Psoas muscle (tissue), 8 donors: ENCODE measurements at regions of chr5 and their contacts with region 1.

Region 1: DNA sequence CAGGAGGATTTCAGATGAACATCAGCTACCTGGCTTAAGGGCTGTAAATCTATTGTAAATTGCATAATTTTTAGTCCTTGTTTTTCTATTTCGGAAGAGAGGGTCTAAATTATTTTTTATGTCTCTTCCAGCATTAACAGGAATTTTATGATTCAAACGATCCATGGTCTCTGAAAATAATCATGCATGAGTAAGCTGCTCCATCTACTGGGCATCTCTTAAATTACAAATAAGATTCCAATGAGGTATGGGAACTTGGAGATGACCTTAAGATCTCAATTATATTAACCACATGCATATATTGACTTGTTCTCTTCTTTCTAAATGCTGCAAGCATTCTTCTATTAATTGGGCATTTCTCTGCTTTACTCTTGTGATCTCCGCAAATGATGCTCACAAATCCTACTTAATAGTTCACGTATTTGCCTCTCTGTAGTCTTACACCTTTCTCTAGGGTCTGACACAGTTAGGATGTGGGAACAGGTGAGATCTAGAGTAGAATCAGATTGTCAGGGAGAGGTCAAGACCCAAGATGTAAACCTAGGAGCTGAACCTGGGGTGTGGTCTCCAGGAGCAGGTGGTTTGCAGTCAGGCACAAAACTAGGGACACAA is 86.9 kb downstream of the NUDT12 start:
- DNase-seq: no peak
- ATAC-seq: peak; percentile 51 to 85 (median 70)
- H3K4me3 ChIP-seq: no peak overlapping the region
- H3K27ac ChIP-seq: no peak overlapping the region
- H3K4me1 ChIP-seq: peaks cover 37% of the 10 kb centered on the region
- H3K27me3 ChIP-seq: no peaks in the 10 kb centered on the region
- CTCF ChIP-seq: peak; percentile 76

Region 2: GRCh38 chr5:103232393-103232999 is 243.2 kb before region 1 on chr5:
- intact Hi-C with region 1: loop called (anchors 1 to 5 kb)
- DNase-seq: no peak
- ATAC-seq: peak in 3 of 4 donors; percentile 53 to 75 (median 72)
- H3K4me3 ChIP-seq: no peak overlapping the region
- H3K27ac ChIP-seq: no peak overlapping the region
- H3K4me1 ChIP-seq: no peaks in the 10 kb centered on the region
- H3K27me3 ChIP-seq: no peaks in the 10 kb centered on the region
- CTCF ChIP-seq: peak; percentile 79

Region 3: GRCh38 chr5:103258368-103258956 is 217.3 kb before region 1 on chr5 and contains the start of gene MACIR:
- intact Hi-C with region 1: loop called (anchors 5 to 10 kb)
- DNase-seq: peak; percentile 97 to 98
- ATAC-seq: peak; percentile 95 to 98 (median 96)
- H3K4me3 ChIP-seq: peak within 1 kb of the TSS; percentile 94
- H3K27ac ChIP-seq: peak within 1 kb of the TSS; percentile 88
- H3K4me1 ChIP-seq: peaks cover 23% of the 10 kb centered on the region
- H3K27me3 ChIP-seq: no peaks in the 10 kb centered on the region
- CTCF ChIP-seq: no peak
- total RNA-seq, gene MACIR: 4.7 to 25.3 (median 5.0) TPM

Region 4: DNA sequence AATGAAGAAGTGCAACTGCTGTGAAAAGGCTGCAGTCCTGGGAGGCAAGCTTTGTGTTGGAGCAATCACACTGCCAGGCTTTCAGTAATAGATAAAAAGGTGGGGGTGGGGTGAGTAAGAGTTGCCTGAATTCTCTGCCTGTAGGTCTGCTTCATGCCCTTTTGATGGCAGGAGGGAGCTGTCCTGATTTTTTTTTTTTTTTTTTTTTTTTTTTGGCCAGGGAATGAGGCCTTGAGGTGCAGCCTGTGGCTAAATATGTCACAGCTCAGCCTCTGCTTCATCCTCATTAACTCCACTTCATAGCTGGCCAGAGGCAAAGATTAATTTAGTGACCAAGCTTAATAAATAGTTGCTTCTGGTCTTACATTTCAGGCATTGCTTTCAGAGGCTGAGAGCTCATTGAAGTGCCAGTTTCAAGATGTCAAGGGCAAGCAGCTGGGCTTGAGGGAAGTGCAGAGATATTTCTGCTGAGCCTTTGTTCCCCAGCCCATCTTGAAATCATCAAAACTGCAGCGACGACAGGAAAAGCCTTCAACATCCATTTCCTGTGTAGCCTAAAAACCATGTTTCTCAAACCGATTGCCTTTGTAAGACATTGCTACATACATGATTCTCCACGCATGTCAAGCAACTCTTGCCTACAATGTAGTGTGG is 82.5 kb before region 1 on chr5:
- intact Hi-C with region 1: loop called in 1 of 2 experiments (anchors 5 kb)
- DNase-seq: no peak
- ATAC-seq: peak in 3 of 4 donors; percentile 50 to 77 (median 73)
- H3K4me3 ChIP-seq: no peak overlapping the region
- H3K27ac ChIP-seq: peak overlapping the region; percentile 41
- H3K4me1 ChIP-seq: peaks cover 7% of the 10 kb centered on the region
- H3K27me3 ChIP-seq: no peaks in the 10 kb centered on the region
- CTCF ChIP-seq: peak; percentile 26

Region 5: GRCh38 chr5:103546858-103547257 is 71.1 kb after region 1 on chr5:
- intact Hi-C with region 1: no loop called
- DNase-seq: no peak
- ATAC-seq: no peak
- H3K4me3 ChIP-seq: no peak overlapping the region
- H3K27ac ChIP-seq: no peak overlapping the region
- H3K4me1 ChIP-seq: no peaks in the 10 kb centered on the region
- H3K27me3 ChIP-seq: no peaks in the 10 kb centered on the region
- CTCF ChIP-seq: no peak

Region 6: DNA sequence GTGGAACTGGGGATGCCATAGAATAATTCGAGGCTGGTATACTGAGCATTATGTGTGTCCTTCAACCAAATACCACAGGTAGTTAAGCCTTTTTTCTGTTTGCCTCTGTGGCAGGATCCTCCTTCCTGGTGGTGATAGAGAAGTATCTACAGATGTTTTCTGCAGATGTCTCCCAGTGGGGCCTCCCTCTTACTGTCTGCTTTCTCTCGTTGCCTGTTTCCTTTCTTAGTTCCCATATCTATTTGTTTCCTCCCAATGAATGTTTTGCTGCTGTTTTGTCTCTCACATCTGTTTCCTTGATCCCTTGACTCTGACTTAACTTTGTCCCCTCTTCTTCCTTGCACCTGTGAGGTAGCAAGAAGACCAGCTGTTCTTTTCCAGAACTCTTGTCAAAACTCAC is 217.8 kb after region 1 on chr5:
- intact Hi-C with region 1: no loop called
- DNase-seq: no peak
- ATAC-seq: no peak
- H3K4me3 ChIP-seq: no peak overlapping the region
- H3K27ac ChIP-seq: no peak overlapping the region
- H3K4me1 ChIP-seq: no peaks in the 10 kb centered on the region
- H3K27me3 ChIP-seq: no peaks in the 10 kb centered on the region
- CTCF ChIP-seq: no peak